Activated CD4-positive, alpha-beta memory T cell treated with anti-CD3 and anti-CD28 coated beads, Interleukin-2, amount 10 ng/mL, durations not matched to agents 7 days and 5 days (primary cell): ENCODE measurements at regions of chr6 and their contacts with region 1.

Region 1: DNA sequence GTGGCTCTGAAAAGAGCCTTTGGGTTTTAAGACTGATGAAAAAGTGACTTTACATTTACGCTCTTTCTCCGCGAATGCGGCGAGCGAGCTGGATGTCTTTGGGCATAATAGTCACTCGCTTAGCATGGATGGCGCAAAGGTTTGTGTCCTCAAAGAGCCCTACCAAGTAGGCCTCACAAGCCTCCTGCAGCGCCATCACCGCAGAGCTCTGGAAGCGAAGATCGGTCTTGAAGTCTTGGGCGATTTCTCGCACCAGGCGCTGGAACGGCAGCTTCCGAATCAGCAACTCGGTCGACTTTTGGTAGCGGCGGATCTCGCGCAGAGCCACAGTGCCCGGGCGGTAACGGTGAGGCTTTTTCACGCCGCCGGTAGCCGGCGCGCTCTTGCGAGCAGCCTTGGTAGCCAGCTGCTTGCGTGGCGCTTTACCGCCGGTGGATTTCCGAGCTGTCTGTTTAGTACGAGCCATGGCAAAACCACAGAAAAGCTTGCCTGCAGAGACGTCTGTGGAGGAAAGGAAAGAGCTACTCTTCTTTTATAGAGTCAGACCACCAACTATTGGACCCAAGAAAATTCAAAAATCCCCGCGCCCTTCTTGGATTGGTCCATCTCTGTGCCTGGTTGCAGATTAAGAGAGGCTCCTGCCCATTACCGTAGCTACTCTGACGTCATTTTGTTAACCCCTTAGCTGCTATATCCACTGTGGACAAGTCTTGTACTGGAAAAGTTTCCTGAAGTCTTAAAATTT is 55.5 kb upstream of the HFE start:
- DNase-seq: peak; percentile 92
- H3K4me3 Mint-ChIP-seq: peak overlapping the region; percentile 84
- H3K27ac Mint-ChIP-seq: peak overlapping the region; percentile 100
- H3K4me1 Mint-ChIP-seq: peaks cover 74% of the 10 kb centered on the region
- H3K27me3 Mint-ChIP-seq: peaks cover 4% of the 10 kb centered on the region

Region 2: GRCh38 chr6:26103770-26104456 is 72.1 kb after region 1 on chr6:
- CTCF ChIA-PET with region 1: interaction called, 5 read pairs
- POLR2A ChIA-PET with region 1: interaction called, 37 read pairs
- DNase-seq: peak; percentile 93
- H3K4me3 Mint-ChIP-seq: peak overlapping the region; percentile 80
- H3K27ac Mint-ChIP-seq: peak overlapping the region; percentile 99
- H3K4me1 Mint-ChIP-seq: peaks cover 23% of the 10 kb centered on the region
- H3K27me3 Mint-ChIP-seq: no peaks in the 10 kb centered on the region

Region 3: DNA sequence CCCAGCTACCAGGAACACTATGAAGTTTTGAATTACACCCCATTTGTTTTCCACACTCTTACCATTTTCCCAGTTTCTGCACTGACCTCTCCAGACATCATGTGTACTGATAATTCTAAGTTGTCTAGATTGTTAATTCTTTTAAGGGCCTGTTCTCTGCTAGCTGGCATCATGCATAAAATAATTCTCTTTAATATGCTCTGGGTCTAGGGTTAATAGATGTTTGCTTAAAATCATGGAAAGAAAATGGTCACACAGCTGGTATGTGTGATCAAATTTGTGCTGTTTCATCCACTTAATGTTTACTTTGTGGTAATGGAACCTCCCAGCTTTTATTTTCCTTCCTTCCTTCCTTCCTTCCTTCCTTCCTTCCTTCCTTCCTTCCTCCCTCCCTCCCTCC is 104.6 kb after region 1 on chr6:
- CTCF ChIA-PET with region 1: no interaction called
- POLR2A ChIA-PET with region 1: no interaction called
- DNase-seq: no peak
- H3K4me3 Mint-ChIP-seq: no peak overlapping the region
- H3K27ac Mint-ChIP-seq: no peak overlapping the region
- H3K4me1 Mint-ChIP-seq: peaks cover 21% of the 10 kb centered on the region
- H3K27me3 Mint-ChIP-seq: no peaks in the 10 kb centered on the region

Region 4: DNA sequence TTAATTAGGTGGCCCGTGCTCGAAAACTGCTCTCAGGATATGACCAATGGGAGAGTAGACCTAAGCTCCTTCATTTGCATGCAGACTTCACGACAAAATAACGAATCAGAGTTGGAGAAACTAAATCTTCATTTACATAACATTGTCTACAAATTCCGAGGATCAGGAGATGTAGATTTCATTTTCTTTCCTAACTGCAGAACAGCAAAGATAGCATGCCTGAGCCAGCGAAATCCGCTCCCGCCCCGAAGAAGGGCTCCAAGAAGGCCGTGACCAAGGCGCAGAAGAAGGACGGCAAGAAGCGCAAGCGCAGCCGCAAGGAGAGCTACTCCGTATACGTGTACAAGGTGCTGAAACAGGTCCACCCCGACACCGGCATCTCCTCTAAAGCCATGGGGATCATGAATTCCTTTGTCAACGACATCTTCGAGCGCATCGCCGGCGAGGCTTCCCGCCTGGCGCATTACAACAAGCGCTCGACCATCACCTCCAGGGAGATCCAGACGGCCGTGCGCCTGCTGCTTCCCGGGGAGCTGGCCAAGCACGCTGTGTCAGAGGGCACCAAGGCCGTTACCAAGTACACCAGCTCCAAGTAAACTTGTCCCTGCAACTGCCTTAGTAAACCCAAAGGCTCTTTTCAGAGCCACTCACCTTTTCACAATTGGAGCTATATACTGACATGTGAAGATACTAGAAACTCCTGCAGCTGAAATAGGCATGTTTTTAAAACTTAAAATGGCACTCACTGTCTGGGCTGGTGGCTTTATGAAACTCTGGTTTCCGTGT is 152.0 kb after region 1 on chr6:
- CTCF ChIA-PET with region 1: interaction called, 3 read pairs
- POLR2A ChIA-PET with region 1: interaction called, 32 read pairs
- DNase-seq: peak; percentile 78
- H3K4me3 Mint-ChIP-seq: peak overlapping the region; percentile 75
- H3K27ac Mint-ChIP-seq: peak overlapping the region; percentile 92
- H3K4me1 Mint-ChIP-seq: peaks cover 71% of the 10 kb centered on the region
- H3K27me3 Mint-ChIP-seq: no peaks in the 10 kb centered on the region

Region 5: DNA sequence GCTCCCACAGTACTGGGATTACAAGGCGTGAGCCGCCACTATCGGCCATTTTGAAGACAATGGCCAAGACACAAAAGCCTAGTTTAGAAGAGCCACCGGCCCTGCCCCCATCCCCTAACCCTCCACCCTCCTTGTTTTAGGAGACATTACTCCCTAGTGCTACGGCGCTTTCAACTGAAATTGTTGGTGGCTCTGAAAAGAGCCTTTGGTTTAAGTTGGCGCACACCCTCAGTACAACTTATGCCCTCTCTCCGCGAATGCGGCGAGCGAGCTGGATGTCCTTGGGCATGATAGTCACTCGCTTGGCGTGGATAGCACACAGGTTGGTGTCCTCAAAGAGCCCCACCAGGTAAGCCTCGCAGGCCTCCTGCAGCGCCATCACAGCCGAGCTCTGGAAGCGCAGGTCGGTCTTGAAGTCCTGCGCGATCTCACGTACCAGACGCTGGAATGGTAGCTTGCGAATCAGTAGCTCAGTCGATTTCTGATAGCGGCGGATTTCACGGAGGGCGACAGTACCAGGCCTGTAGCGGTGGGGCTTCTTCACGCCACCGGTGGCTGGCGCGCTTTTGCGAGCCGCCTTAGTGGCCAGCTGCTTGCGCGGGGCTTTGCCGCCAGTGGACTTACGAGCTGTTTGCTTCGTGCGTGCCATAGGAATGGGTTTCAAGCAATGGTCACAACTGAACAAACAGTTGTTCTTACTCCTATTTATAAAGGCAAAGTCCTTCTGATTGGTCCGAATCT is 218.4 kb after region 1 on chr6:
- CTCF ChIA-PET with region 1: interaction called, 3 read pairs
- POLR2A ChIA-PET with region 1: interaction called, 42 read pairs
- DNase-seq: peak; percentile 84
- H3K4me3 Mint-ChIP-seq: peak overlapping the region; percentile 90
- H3K27ac Mint-ChIP-seq: peak overlapping the region; percentile 93
- H3K4me1 Mint-ChIP-seq: peaks cover 42% of the 10 kb centered on the region
- H3K27me3 Mint-ChIP-seq: no peaks in the 10 kb centered on the region